ENCODE measurements at regions of chr3 and their contacts with region 1.

Region 1: DNA sequence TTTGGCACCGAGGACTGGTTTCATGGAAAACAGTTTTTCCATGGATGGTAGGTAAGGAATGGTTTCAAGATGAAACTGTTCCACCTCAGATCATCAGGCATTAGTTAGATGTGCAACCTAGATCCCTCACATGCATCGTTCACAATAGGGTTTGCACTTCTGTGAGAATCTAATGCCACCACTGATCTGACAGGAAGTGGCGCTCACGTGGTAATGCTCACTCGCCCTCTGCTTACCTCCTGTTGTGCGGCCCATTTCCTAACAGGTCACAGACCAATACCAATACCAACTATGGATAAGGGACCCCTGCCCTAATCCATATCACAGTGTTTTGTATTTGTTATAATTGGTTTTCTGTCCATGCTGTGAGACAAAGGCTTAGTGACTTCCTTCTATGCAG is 58.9 kb downstream of the SLMAP start:
- DNase-seq: no peak
- ATAC-seq: peak in 2 of 4 donors; percentile 22 to 29
- H3K4me3 ChIP-seq: no peak overlapping the region
- H3K27ac ChIP-seq: no peak overlapping the region
- H3K4me1 ChIP-seq: peaks cover 0 to 14% (median 6%) of the 10 kb centered on the region in 4 donors
- H3K27me3 ChIP-seq: no peaks in the 10 kb centered on the region
- CTCF ChIP-seq: no peak
- POLR2A ChIP-seq: no peak

Region 2: GRCh38 chr3:57706462-57706861 is 108.6 kb before region 1 on chr3:
- intact Hi-C with region 1: no loop called
- DNase-seq: no peak
- ATAC-seq: peak in 2 of 4 donors; percentile 27 to 48
- H3K4me3 ChIP-seq: no peak overlapping the region
- H3K27ac ChIP-seq: no peak overlapping the region
- H3K4me1 ChIP-seq: no peaks in the 10 kb centered on the region
- H3K27me3 ChIP-seq: no peaks in the 10 kb centered on the region
- CTCF ChIP-seq: no peak
- POLR2A ChIP-seq: no peak

Region 3: DNA sequence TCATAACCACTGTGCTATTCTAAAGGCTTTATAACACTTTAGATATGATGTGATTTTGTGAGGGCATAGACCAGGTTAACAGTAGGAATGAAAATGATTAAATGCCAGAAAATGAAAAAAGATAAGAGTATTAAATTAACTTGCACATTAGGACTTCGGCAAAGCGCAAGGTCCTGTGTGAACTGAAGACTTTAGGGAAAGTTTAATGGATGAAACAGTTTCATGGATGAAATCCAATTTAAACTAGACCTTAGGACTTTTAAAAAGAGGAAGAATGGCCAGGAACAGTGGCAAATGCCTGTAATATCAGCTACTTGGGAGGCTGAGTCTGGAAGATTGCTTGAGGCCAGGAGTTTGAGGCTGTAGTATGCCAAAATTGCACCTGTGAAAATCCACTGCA is 50.2 kb before region 1 on chr3:
- intact Hi-C with region 1: loop called in 1 of 2 experiments (anchors 10 kb)
- DNase-seq: no peak
- ATAC-seq: peak; percentile 80 to 92 (median 84)
- H3K4me3 ChIP-seq: no peak overlapping the region
- H3K27ac ChIP-seq: no peak overlapping the region
- H3K4me1 ChIP-seq: peaks cover 0 to 41% (median 11%) of the 10 kb centered on the region in 4 donors
- H3K27me3 ChIP-seq: no peaks in the 10 kb centered on the region
- CTCF ChIP-seq: no peak
- POLR2A ChIP-seq: no peak

Measured in right lobe of liver (tissue), 6 donors.